ENCODE measurements at regions of chr17 and their contacts with region 1.

Region 1: DNA sequence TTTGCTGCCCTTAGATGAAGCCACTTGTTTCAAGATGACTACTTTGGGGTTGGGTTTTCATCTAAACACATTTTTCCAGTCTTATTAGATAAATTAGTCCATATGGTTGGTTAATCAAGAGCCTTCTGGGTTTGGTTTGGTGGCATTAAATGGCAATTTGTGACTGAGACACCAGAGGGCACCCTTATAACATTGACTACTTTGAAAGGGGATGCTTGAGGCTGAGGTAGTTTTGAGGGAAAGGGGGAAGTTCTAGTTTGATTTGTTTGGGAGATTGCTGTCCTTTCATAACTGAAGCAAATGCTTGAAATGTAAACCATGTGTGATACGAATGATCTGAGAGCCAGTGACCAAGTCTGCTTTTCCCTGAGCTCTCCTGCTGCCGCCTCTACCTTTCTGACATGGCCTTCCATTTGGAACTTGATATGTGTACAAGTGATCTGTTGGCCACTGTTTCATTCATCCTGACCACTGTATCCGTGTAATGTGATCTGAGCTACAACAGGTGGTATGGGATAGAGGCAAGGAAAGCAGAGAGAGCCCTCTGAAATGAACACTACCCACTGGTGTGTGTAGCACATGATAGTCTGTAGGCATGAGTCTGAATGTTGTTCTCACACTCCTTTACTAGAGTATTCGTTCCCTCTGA is 5.8 kb upstream of the RARA start:
- DNase-seq: peak; percentile 57
- H3K4me3 ChIP-seq: no peak overlapping the region
- H3K27ac ChIP-seq: no peak overlapping the region
- H3K27me3 ChIP-seq: no peaks in the 10 kb centered on the region
- CTCF ChIP-seq: peak; percentile 73

Region 2: DNA sequence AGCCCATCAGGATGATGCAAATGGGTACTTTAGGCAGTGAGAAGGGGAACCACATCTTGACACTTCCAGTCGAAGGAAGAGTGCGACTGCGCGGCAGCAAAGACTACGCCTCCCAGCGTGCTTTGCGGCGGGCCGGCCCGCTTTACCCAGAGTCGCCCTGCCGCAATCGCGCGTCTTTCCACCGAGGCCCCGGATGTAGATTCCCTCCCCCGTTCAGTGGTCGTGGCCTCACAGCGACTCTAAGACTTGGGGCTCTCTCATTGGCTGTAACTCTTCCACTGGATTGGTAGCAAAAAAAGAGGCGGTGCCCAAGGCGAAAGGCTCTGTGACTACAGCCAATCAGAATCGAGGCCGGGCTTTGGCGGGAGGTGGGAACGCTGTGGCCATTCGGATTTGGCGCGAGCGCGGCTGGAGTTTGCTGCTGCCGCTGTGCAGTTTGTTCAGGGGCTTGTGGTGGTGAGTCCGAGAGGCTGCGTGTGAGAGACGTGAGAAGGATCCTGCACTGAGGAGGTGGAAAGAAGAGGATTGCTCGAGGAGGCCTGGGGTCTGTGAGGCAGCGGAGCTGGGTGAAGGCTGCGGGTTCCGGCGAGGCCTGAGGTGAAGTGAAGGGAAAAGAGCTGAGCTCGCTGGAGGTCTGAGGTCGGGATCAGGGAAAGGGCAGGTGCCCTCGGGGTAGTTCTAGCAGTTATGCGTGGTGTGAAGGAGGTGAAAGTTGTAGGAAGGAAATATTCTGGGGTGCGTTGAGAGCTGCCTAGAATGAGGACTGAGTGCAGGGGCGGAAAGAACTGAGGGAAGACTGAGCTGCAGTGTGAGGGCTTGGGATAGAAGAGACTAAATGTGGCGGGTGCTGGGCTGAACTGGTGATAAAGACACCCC is 15.4 kb before region 1 on chr17 and contains the start of gene CDC6:
- CTCF ChIA-PET with region 1: interaction called, 12 read pairs
- POLR2A ChIA-PET with region 1: interaction called, 6 read pairs
- DNase-seq: peak; percentile 97
- H3K4me3 ChIP-seq: peak within 1 kb of the TSS; percentile 81
- H3K27ac ChIP-seq: peak within 1 kb of the TSS; percentile 4
- H3K27me3 ChIP-seq: no peaks in the 10 kb centered on the region
- CTCF ChIP-seq: no peak
- polyA plus RNA-seq, gene CDC6: 8.6 and 9.1 TPM in 2 replicates

Region 3: GRCh38 chr17:40317880-40318829 is 15.0 kb after region 1 on chr17:
- CTCF ChIA-PET with region 1: interaction called, 99 read pairs
- POLR2A ChIA-PET with region 1: interaction called, 10 read pairs
- DNase-seq: peak; percentile 90
- H3K4me3 ChIP-seq: peak overlapping the region; percentile 82
- H3K27ac ChIP-seq: peak overlapping the region; percentile 78
- H3K27me3 ChIP-seq: no peaks in the 10 kb centered on the region
- CTCF ChIP-seq: no peak

Region 4: GRCh38 chr17:40348568-40349422 is 45.7 kb after region 1 on chr17:
- CTCF ChIA-PET with region 1: interaction called, 112 read pairs
- POLR2A ChIA-PET with region 1: interaction called, 8 read pairs
- DNase-seq: no peak
- H3K4me3 ChIP-seq: no peak overlapping the region
- H3K27ac ChIP-seq: no peak overlapping the region
- H3K27me3 ChIP-seq: no peaks in the 10 kb centered on the region
- CTCF ChIP-seq: no peak

Region 5: GRCh38 chr17:40355123-40355803 is 52.1 kb after region 1 on chr17:
- CTCF ChIA-PET with region 1: interaction called, 112 read pairs
- POLR2A ChIA-PET with region 1: interaction called, 5 read pairs
- DNase-seq: no peak
- H3K4me3 ChIP-seq: no peak overlapping the region
- H3K27ac ChIP-seq: no peak overlapping the region
- H3K27me3 ChIP-seq: no peaks in the 10 kb centered on the region
- CTCF ChIP-seq: peak; percentile 93

Region 6: GRCh38 chr17:40417609-40418427 is 114.7 kb after region 1 on chr17 and contains the start of gene TOP2A:
- CTCF ChIA-PET with region 1: interaction called, 20 read pairs
- POLR2A ChIA-PET with region 1: interaction called, 5 read pairs
- DNase-seq: peak; percentile 100
- H3K4me3 ChIP-seq: peak within 1 kb of the TSS; percentile 82
- H3K27ac ChIP-seq: peak within 1 kb of the TSS; percentile 31
- H3K27me3 ChIP-seq: no peaks in the 10 kb centered on the region
- CTCF ChIP-seq: no peak
- polyA plus RNA-seq, gene TOP2A: 28.2 and 53.5 TPM in 2 replicates

Measured in AG04450 (cell line).